Calu3 (cell line): ENCODE measurements at regions of chr16 and their contacts with region 1.

Region 1: DNA sequence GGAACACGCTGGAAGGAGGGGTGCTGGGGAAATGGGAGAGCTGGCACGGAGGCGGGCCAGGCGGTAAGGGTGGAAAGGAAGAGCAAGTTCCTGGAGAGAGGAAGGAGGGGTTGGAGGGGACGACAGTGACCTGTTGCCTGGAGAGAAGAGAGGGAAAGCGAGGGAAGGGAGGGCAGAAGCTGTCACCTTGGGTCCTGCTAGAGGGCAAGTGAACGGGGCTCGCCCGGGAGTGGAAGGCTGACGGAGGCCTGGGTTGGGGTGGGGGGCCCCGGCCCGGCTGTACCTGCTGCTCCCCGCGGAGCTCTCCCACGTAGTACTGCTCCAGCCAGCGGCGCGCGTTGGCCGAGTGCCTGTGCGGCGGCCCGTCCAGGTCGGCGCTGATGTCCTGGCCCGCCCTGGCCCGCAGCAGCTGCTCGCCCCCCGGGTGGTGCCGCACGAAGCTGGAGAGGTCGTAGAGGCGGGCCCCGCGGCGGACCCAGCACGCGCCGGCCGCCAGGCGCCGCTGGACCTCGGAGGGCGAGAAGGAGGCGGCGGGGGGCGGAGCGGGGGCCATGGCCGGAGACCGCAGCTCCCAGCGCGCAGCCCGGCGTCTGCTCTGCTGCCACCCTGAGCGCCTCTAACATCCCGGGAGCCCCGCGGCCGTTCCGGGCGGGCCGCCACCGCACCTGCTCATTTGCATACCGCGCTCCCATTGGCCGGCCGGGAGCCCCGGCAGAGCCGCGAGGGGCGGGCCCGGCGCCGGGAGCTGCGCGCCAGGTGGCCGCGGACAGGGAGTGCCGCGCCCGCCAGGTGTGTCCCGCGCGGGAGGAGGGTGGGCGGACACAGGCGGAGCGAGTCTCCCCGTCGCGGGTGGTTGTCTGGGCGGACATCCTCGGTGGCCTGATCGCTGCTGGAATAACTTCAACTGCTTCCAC is at the start of gene FA2H:
- DNase-seq: peak; percentile 99
- H3K4me3 Mint-ChIP-seq: peak within 1 kb of the TSS; percentile 86
- H3K27ac Mint-ChIP-seq: peak within 1 kb of the TSS; percentile 94
- H3K4me1 Mint-ChIP-seq: peaks cover 25% of the 10 kb centered on the region
- H3K27me3 Mint-ChIP-seq: no peaks in the 10 kb centered on the region
- CTCF ChIP-seq: peak; percentile 52
- total RNA-seq, gene FA2H: 74.2 and 122 TPM in 2 replicates

Region 2: DNA sequence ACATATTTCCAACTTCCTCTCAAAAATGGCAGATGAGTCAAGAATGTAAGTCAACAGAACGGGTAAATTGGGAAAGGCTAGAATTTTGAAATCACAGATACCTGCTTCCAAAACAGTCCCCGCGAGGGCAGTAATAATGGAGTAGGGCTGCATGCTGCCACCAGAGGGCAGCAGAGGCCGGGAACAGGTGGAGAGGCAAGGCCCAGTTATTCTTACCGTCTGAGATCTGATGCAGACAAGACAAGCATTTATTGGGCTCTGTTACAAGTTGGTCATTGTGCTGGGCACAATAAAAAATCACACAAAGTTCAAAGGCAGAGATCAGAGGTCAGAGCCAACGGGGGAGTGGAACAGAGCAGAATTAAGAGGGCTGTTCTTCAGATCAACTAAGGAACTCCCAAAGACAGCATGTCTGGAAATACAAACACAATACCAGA is 65.0 kb before region 1 on chr16:
- CTCF ChIA-PET with region 1: interaction called, 5 read pairs
- intact Hi-C with region 1: loop called (anchors 2 kb)
- DNase-seq: peak; percentile 89
- H3K4me3 Mint-ChIP-seq: no peak overlapping the region
- H3K27ac Mint-ChIP-seq: peak overlapping the region; percentile 24
- H3K4me1 Mint-ChIP-seq: peaks cover 11% of the 10 kb centered on the region
- H3K27me3 Mint-ChIP-seq: no peaks in the 10 kb centered on the region
- CTCF ChIP-seq: peak; percentile 97

Region 3: DNA sequence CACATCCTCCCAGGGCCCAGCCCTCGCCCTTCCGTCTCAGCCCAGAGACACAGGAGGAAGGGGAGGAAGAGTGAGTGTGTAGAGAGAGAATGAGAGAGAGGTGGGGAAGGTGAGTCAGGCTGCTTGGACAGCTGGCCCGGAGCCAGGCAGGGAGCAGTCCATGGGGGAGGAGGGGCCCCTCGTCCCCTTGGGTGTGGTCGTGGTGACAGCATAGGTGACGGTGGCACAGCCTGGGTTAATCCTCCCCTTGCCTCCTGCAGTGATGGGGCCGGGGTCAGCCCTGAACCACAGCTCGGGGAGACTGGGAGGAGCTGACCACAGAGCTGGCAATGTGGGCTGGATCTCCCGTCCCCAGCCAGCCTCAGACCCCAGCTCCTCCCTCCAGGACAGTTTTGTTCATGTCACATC is 36.3 kb before region 1 on chr16:
- CTCF ChIA-PET with region 1: interaction called, 13 read pairs
- intact Hi-C with region 1: no loop called
- DNase-seq: peak; percentile 94
- H3K4me3 Mint-ChIP-seq: peak overlapping the region; percentile 44
- H3K27ac Mint-ChIP-seq: peak overlapping the region; percentile 96
- H3K4me1 Mint-ChIP-seq: peaks cover 61% of the 10 kb centered on the region
- H3K27me3 Mint-ChIP-seq: no peaks in the 10 kb centered on the region
- CTCF ChIP-seq: no peak

Region 4: DNA sequence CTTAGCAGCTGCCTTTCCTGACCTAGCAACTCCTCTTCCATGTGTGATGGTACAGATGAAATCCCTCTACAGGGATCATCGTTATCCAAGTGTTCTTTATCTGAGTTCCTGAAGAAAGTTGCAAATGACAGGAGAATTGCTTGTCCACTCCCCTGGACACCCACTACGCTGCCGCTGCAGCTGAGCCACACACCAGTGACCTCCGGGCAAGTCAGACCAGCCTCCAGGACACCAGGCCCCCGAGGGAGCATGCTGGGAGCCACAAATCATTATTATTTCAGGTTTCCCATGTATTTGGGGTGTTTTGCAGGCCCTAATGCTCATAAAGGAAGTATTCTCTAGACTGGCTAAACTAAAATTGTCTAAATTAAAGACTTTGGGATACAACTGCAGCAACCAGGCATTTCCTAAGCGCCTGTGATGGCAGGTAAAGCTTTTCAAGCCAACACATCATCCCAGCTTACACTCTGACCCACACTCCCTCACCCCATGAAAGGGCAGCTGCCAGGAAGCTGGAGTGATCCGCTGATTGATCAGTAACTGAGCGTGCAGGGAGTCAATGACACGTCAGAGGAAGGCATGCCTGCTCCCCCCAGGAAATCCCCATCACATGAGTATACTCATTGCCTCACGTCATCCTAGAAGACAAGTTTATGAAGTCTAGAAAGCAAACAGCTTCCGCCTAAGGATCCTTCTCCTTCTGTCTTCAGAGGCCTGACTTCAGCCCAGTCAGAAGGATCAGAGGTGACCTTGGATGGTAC is 14.3 kb before region 1 on chr16:
- CTCF ChIA-PET with region 1: interaction called, 10 read pairs
- intact Hi-C with region 1: no loop called
- DNase-seq: peak; percentile 91
- H3K4me3 Mint-ChIP-seq: peak overlapping the region; percentile 9
- H3K27ac Mint-ChIP-seq: peak overlapping the region; percentile 98
- H3K4me1 Mint-ChIP-seq: peaks cover 73% of the 10 kb centered on the region
- H3K27me3 Mint-ChIP-seq: no peaks in the 10 kb centered on the region
- CTCF ChIP-seq: no peak

Region 5: GRCh38 chr16:74862741-74863244 is 88.3 kb after region 1 on chr16:
- CTCF ChIA-PET with region 1: interaction called, 20 read pairs
- intact Hi-C with region 1: no loop called
- DNase-seq: peak; percentile 45
- H3K4me3 Mint-ChIP-seq: no peak overlapping the region
- H3K27ac Mint-ChIP-seq: peak overlapping the region; percentile 26
- H3K4me1 Mint-ChIP-seq: peaks cover 9% of the 10 kb centered on the region
- H3K27me3 Mint-ChIP-seq: no peaks in the 10 kb centered on the region
- CTCF ChIP-seq: peak; percentile 91

Region 6: DNA sequence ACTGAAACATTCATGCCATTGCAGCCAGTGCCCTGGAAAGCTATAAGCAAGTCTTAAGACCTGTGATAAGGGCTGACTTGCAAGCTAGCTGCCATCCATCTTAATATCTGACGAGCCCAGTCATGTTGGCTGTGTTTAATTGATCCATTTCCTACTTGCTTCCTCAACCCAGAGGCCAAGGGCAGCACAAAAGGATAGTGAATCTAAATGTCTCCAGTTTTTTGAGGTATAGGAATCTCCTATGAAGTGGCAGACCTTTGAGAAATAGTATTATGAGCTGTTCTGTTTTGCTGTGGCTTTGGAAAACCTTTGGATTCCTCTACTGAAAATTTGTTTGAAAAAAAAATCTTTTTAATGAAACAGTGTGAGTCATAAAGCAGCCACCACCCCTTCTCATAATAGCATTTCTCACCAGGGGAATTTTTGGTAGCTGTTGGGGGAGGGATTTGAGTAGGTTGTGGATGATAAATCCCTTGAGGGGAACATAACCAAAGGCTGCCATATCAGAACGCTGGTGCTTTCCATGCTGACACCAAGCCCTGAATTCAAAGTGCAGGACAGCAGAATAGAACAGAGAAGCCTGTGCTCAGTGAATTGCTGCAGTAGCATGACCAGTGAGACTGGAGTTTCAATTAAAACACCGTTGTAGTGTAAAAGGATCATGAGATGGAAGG is 237.3 kb after region 1 on chr16:
- CTCF ChIA-PET with region 1: no interaction called
- intact Hi-C with region 1: no loop called
- DNase-seq: peak; percentile 51
- H3K4me3 Mint-ChIP-seq: peak overlapping the region; percentile 34
- H3K27ac Mint-ChIP-seq: peak overlapping the region; percentile 33
- H3K4me1 Mint-ChIP-seq: peaks cover 24% of the 10 kb centered on the region
- H3K27me3 Mint-ChIP-seq: no peaks in the 10 kb centered on the region
- CTCF ChIP-seq: no peak